Ascending aorta (tissue), 2 donors: ENCODE measurements at regions of chr11 and their contacts with region 1.

Region 1: GRCh38 chr11:46554205-46555055 is 39.4 kb downstream of the AMBRA1 start:
- DNase-seq: no peak
- H3K4me3 ChIP-seq: no peak overlapping the region
- H3K27ac ChIP-seq: peak overlapping the region; percentile 53 to 78
- H3K4me1 ChIP-seq: peaks cover 5 to 23% of the 10 kb centered on the region in 2 donors
- H3K27me3 ChIP-seq: no peaks in the 10 kb centered on the region
- CTCF ChIP-seq: no peak

Region 2: GRCh38 chr11:46410021-46410420 is 144.4 kb before region 1 on chr11:
- intact Hi-C with region 1: no loop called
- DNase-seq: no peak
- H3K4me3 ChIP-seq: no peak overlapping the region
- H3K27ac ChIP-seq: no peak overlapping the region
- H3K4me1 ChIP-seq: no peaks in the 10 kb centered on the region
- H3K27me3 ChIP-seq: no peaks in the 10 kb centered on the region
- CTCF ChIP-seq: no peak

Region 3: GRCh38 chr11:46564459-46564858 is 10.0 kb after region 1 on chr11:
- intact Hi-C with region 1: no loop called
- DNase-seq: no peak
- H3K4me3 ChIP-seq: no peak overlapping the region
- H3K27ac ChIP-seq: no peak overlapping the region
- H3K4me1 ChIP-seq: peaks cover 0 to 13% of the 10 kb centered on the region in 2 donors
- H3K27me3 ChIP-seq: no peaks in the 10 kb centered on the region
- CTCF ChIP-seq: no peak

Region 4: GRCh38 chr11:46593550-46594373 is 39.3 kb after region 1 on chr11 and contains the start of gene AMBRA1:
- intact Hi-C with region 1: loop called (anchors 5 kb)
- DNase-seq: peak; percentile 47 to 91
- H3K4me3 ChIP-seq: peak within 1 kb of the TSS; percentile 85 to 99
- H3K27ac ChIP-seq: peak within 1 kb of the TSS; percentile 75 to 83
- H3K4me1 ChIP-seq: peaks cover 3 to 36% of the 10 kb centered on the region in 2 donors
- H3K27me3 ChIP-seq: no peaks in the 10 kb centered on the region
- CTCF ChIP-seq: peak in 1 of 3 experiments; percentile 5
- total RNA-seq, gene AMBRA1: 12.1 TPM

Region 5: DNA sequence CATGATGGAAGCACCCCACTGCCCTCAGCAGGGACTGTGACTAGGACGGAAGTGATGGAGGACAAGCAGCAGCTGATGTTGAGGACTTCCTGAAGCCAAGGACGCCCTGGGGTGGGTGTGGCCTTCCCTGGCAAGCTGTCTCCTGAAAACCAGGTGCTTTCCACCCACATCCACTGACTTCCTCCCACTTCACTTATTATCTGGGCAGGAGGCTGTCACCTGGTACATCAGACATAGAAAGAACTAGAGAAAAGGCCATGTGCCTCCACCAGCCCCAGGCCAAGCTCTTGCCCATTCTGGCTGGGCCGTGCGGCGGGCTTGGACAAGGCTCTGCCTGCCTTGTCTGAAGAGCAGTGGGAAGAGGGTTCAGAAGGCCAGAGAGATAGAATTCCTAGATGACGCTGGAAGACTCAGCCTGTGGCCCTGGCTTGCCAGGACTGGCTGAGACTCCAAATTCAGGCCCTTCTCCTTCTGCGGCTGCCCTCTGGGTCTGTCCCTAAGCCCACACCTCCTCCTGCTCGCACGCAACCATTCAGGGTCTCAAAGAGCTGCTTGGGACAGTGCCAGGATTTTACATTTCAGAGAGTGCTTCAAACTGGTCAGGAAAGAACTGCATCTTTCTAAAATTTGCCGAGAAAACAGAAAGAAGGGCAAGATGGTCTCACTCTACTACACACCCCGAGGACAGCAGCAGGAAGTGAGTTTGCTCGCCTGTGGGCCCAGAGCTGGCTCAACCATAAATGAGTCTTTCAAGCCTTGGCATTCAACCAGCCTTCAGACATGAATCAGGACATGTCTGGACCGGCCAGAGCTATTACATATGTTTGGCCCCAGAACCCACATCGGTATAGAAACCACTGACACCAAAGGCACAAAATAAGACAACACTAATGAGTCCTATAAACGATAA is 132.7 kb after region 1 on chr11:
- intact Hi-C with region 1: no loop called
- DNase-seq: no peak
- H3K4me3 ChIP-seq: no peak overlapping the region
- H3K27ac ChIP-seq: peak overlapping the region; percentile 67 to 80
- H3K4me1 ChIP-seq: peaks cover 0 to 15% of the 10 kb centered on the region in 2 donors
- H3K27me3 ChIP-seq: no peaks in the 10 kb centered on the region
- CTCF ChIP-seq: no peak